MCF 10A (cell line): ENCODE measurements at regions of chr16 and their contacts with region 1.

Region 1: DNA sequence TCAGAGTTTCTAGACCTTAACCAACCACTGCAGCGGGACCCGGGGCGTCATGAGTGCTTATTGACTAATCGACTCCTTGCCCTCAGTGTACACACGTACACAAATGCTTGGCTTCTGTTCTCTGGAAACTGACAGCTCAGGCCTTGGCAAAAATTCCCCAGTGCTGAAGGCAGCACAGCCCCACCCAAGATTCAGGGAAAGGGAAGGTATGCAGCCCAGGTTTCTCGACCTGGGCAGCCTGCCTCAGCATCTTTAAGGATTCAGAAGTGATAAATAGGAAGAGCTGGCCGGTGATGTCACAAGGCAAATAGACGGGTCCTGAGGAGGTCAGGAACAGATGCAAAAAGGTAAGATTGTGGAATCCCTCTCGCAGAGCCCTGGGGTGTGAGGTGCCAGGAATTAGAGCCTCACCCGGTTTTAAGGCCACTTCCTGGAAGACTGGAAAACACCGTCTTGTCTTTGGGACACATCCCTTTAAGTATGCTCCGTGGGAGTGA is 9.0 kb upstream of the CDH3 start:
- DNase-seq: peak; percentile 82
- H3K4me3 Mint-ChIP-seq: peak overlapping the region; percentile 26
- H3K27ac Mint-ChIP-seq: peak overlapping the region; percentile 76
- H3K4me1 Mint-ChIP-seq: peaks cover 19% of the 10 kb centered on the region
- H3K27me3 Mint-ChIP-seq: no peaks in the 10 kb centered on the region
- CTCF ChIP-seq: no peak

Region 2: DNA sequence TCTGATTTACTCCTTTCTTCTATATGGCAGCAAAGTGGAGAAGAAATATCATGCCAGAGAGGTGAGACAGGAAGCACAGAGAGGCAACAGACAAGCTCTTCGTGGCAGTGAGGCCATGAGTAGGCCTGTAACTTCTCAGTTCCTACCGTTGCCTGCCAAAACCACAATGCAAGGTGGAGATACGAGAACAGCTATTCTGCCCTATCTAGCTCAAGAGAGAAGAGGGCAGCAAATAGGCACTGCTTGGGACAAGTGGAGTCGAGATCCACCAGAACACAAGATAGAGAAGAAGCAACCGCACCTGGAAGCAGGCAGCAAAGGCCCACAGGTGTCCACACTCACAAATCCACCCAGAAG is 854.6 kb before region 1 on chr16:
- CTCF ChIA-PET with region 1: no interaction called
- POLR2A ChIA-PET with region 1: no interaction called
- intact Hi-C with region 1: no loop called
- DNase-seq: no peak
- H3K4me3 Mint-ChIP-seq: no peak overlapping the region
- H3K27ac Mint-ChIP-seq: no peak overlapping the region
- H3K4me1 Mint-ChIP-seq: peaks cover 14% of the 10 kb centered on the region
- H3K27me3 Mint-ChIP-seq: no peaks in the 10 kb centered on the region
- CTCF ChIP-seq: no peak

Region 3: DNA sequence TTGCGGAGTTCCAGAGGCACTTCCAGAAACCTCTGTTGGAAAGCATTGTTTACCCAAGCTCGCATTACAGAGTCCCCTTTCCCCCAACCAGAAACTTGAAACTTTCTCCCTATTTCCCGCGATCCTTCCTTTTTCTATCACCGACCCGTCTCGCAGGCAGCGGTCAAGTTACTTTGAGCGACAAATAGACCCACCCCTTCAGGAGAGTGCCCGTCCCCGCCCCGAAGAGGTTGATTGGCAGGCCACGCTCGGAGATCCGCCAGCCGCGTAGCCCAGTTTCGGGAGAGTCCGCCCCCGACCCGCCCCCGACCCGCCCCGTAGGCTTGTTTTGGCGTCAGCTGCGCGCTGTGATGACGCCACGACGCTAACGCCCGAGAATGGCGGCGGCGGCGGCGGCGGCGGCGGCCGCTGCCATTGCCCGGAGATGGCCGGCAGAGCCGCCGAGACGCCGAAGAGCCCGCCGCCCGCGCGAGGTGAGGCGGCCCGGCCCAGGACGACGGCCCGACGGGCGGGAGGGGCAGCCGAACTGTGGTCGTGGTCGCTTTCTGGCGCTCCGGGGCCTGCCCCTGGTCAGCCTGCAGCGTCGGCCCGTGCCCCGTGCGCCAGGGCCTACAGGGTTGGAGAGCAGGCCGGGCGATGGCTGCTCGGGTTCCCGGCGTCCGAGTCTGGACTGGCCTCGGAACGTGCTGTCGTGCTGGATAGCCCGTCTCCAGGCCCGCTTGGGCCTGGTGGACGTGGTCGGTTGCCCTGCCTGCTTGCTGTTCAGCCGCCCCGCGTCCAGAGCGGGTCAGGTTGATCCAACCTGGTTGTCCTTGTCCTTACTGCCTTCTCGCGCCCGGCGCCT is 743.0 kb before region 1 on chr16 and contains the start of gene PSKH1:
- CTCF ChIA-PET with region 1: no interaction called
- POLR2A ChIA-PET with region 1: no interaction called
- intact Hi-C with region 1: no loop called
- DNase-seq: peak; percentile 96
- H3K4me3 Mint-ChIP-seq: peak within 1 kb of the TSS; percentile 92
- H3K27ac Mint-ChIP-seq: peak within 1 kb of the TSS; percentile 92
- H3K4me1 Mint-ChIP-seq: peaks cover 13% of the 10 kb centered on the region
- H3K27me3 Mint-ChIP-seq: no peaks in the 10 kb centered on the region
- CTCF ChIP-seq: no peak
- total RNA-seq, gene PSKH1: 21.7 and 27.9 TPM in 2 replicates

Region 4: DNA sequence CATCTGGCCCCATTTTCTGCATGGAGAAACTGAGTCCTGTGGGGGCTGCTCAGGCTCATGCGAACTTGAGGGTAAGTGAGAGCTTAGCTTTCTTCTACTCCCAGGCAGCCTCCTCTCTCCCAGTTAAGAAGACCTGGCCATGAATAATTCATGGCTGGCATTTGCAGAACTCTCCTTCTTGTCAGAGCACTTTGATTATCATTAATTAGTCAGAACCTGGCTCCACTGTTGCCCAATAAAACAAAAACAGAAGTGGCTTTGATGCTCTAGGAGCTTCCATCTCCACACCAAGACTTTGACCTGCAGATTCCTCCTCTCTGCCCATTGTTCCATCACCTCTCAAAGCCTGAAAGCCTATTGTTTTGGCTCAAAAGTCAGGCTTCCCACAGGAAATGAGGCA is 36.5 kb before region 1 on chr16:
- CTCF ChIA-PET with region 1: interaction called, 3 read pairs
- POLR2A ChIA-PET with region 1: interaction called, 13 read pairs
- intact Hi-C with region 1: no loop called
- DNase-seq: no peak
- H3K4me3 Mint-ChIP-seq: no peak overlapping the region
- H3K27ac Mint-ChIP-seq: no peak overlapping the region
- H3K4me1 Mint-ChIP-seq: peaks cover 10% of the 10 kb centered on the region
- H3K27me3 Mint-ChIP-seq: no peaks in the 10 kb centered on the region
- CTCF ChIP-seq: no peak

Region 5: DNA sequence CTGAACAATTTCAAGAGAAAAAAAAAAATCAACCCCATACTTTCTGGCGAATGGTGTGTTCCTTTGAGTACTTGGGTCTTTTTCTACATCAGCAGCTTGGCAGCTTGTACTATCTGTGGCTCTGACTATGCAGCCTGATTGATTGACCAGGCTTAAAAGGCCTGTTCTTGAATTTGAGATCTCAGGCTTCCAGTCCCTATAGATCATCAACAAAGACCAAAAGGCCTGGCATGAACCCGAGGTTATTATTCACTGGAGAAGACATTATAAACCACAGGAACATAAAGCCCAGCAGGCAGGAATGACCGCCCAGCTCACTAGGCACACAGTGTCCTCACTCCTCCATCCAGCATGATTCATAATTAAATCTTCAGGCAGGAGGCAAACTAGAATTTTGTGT is 23.1 kb before region 1 on chr16:
- CTCF ChIA-PET with region 1: interaction called, 6 read pairs
- POLR2A ChIA-PET with region 1: interaction called, 11 read pairs
- intact Hi-C with region 1: no loop called
- DNase-seq: no peak
- H3K4me3 Mint-ChIP-seq: no peak overlapping the region
- H3K27ac Mint-ChIP-seq: peak overlapping the region; percentile 59
- H3K4me1 Mint-ChIP-seq: peaks cover 21% of the 10 kb centered on the region
- H3K27me3 Mint-ChIP-seq: no peaks in the 10 kb centered on the region
- CTCF ChIP-seq: no peak

Region 6: GRCh38 chr16:68668266-68668665 is 32.2 kb after region 1 on chr16:
- CTCF ChIA-PET with region 1: interaction called, 4 read pairs
- POLR2A ChIA-PET with region 1: interaction called, 39 read pairs
- intact Hi-C with region 1: no loop called
- DNase-seq: peak; percentile 95
- H3K4me3 Mint-ChIP-seq: peak overlapping the region; percentile 48
- H3K27ac Mint-ChIP-seq: peak overlapping the region; percentile 92
- H3K4me1 Mint-ChIP-seq: peaks cover 36% of the 10 kb centered on the region
- H3K27me3 Mint-ChIP-seq: no peaks in the 10 kb centered on the region
- CTCF ChIP-seq: no peak

Region 7: DNA sequence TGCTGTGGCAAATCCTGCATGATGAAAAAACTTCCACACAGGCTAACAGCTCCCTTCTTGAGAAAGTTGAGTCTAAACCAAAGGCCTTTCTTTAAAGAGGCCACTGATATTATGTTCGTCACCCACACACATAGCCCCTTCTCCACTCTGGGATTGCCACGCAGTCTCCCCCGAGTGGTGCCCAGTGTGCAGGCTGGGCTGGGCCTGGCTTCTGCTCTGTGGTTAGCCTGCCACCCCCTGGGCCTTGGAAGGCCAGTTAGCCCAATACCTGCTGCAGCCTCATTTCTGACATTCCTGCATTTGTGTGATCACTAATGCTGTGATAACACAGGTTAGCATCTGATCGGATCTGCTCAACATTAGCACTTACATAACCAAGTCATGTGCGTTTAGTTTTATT is 53.8 kb after region 1 on chr16:
- CTCF ChIA-PET with region 1: no interaction called
- POLR2A ChIA-PET with region 1: no interaction called
- intact Hi-C with region 1: no loop called
- DNase-seq: no peak
- H3K4me3 Mint-ChIP-seq: no peak overlapping the region
- H3K27ac Mint-ChIP-seq: no peak overlapping the region
- H3K4me1 Mint-ChIP-seq: no peaks in the 10 kb centered on the region
- H3K27me3 Mint-ChIP-seq: no peaks in the 10 kb centered on the region
- CTCF ChIP-seq: no peak

Region 8: DNA sequence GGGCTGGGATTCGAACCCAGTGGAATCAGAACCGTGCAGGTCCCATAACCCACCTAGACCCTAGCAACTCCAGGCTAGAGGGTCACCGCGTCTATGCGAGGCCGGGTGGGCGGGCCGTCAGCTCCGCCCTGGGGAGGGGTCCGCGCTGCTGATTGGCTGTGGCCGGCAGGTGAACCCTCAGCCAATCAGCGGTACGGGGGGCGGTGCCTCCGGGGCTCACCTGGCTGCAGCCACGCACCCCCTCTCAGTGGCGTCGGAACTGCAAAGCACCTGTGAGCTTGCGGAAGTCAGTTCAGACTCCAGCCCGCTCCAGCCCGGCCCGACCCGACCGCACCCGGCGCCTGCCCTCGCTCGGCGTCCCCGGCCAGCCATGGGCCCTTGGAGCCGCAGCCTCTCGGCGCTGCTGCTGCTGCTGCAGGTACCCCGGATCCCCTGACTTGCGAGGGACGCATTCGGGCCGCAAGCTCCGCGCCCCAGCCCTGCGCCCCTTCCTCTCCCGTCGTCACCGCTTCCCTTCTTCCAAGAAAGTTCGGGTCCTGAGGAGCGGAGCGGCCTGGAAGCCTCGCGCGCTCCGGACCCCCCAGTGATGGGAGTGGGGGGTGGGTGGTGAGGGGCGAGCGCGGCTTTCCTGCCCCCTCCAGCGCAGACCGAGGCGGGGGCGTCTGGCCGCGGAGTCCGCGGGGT is 101.1 kb after region 1 on chr16 and contains the start of gene CDH1:
- CTCF ChIA-PET with region 1: no interaction called
- POLR2A ChIA-PET with region 1: interaction called, 10 read pairs
- intact Hi-C with region 1: no loop called
- DNase-seq: peak; percentile 84
- H3K4me3 Mint-ChIP-seq: peak within 1 kb of the TSS; percentile 79
- H3K27ac Mint-ChIP-seq: peak within 1 kb of the TSS; percentile 69
- H3K4me1 Mint-ChIP-seq: peaks cover 27% of the 10 kb centered on the region
- H3K27me3 Mint-ChIP-seq: no peaks in the 10 kb centered on the region
- CTCF ChIP-seq: no peak
- total RNA-seq, gene CDH1: 37.6 and 37.7 TPM in 2 replicates